SK-N-SH (cell line): ENCODE measurements at regions of chr2 and their contacts with region 1.

Region 1: DNA sequence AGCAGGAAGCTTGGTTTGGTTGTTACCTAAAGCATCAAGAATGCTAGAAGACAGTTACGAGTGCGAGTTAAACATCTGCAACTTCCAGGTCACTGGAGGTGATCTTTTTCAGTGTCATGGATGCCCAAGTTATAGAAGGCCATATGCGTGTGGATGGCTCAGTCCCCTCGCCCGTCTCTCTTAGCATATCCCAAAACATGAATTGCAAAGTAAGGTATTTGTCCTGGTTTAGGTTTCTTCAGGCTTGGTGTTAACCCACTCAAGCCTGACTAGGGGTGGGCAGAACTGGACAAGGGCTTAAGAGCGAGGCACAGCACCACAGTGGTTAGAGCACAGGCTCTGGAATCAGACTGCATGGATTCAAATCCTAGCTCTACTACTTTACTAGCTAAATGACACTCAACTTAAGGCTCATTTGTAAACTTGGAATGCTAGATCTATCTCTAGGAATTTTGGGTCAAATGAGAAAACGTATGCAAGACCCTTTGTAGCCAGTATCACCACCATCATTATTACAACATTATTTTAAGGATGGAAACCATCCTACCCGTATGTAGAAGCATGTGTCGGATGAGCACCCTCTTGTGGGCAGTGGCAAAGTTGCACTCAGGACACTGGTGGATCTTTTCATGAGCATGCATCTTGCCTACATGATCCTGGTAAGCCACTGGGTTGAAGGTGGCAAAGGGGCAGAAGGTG is 11.2 kb downstream of the ZNF142 start:
- DNase-seq: peak; percentile 76
- H3K4me3 ChIP-seq: no peak overlapping the region
- H3K27ac ChIP-seq: no peak overlapping the region; a peak in 1 of 4 replicates
- H3K4me1 ChIP-seq: no peaks in the 10 kb centered on the region; a peak in 1 of 4 replicates
- H3K27me3 ChIP-seq: no peaks in the 10 kb centered on the region
- CTCF ChIP-seq: peak; percentile 88
- EP300 ChIP-seq: no peak
- RAD21 ChIP-seq: peak; percentile 85

Region 2: DNA sequence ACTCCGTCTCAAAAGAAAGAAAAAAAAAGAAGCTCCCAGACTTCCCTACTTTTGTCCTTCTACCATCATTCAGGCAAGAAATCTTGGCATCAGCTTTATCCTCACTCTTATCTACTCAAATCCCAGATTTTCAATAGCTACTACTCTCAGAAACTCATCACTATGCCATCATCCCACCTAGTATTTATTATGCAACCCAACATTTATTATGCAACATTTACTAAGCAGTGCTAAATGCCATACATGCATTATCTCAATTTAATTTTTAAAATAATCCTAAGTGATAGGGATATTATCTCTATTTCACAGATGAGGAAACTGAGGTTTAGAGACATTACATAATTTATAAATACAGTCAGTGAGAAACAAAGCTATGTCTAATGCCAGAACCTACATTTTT is 84.2 kb before region 1 on chr2:
- CTCF ChIA-PET with region 1: interaction called, 10 read pairs
- POLR2A ChIA-PET with region 1: no interaction called
- DNase-seq: no peak
- H3K4me3 ChIP-seq: no peak overlapping the region
- H3K27ac ChIP-seq: no peak overlapping the region
- H3K4me1 ChIP-seq: peaks cover 4 to 5% of the 10 kb centered on the region in 2 experiments; a peak in 2 of 4 replicates
- H3K27me3 ChIP-seq: no peaks in the 10 kb centered on the region
- CTCF ChIP-seq: no peak
- EP300 ChIP-seq: no peak
- RAD21 ChIP-seq: no peak

Region 3: GRCh38 chr2:218631837-218632236 is 16.4 kb before region 1 on chr2:
- CTCF ChIA-PET with region 1: interaction called, 19 read pairs
- POLR2A ChIA-PET with region 1: no interaction called
- DNase-seq: no peak
- H3K4me3 ChIP-seq: no peak overlapping the region
- H3K27ac ChIP-seq: peak overlapping the region in 1 of 2 experiments; percentile 3; a peak in 1 of 4 replicates
- H3K4me1 ChIP-seq: peaks cover 0 to 4% of the 10 kb centered on the region in 2 experiments; a peak in 1 of 4 replicates
- H3K27me3 ChIP-seq: no peaks in the 10 kb centered on the region
- CTCF ChIP-seq: no peak
- EP300 ChIP-seq: no peak
- RAD21 ChIP-seq: no peak

Region 4: GRCh38 chr2:218708086-218708485 is 59.8 kb after region 1 on chr2:
- CTCF ChIA-PET with region 1: no interaction called
- POLR2A ChIA-PET with region 1: no interaction called
- DNase-seq: no peak
- H3K4me3 ChIP-seq: no peak overlapping the region
- H3K27ac ChIP-seq: no peak overlapping the region
- H3K4me1 ChIP-seq: 0 out of 4 replicates have a peak, but pooled peaks cover 0 to 5% of the 10 kb centered on the region in 2 experiments
- H3K27me3 ChIP-seq: no peaks in the 10 kb centered on the region
- CTCF ChIP-seq: no peak
- EP300 ChIP-seq: no peak
- RAD21 ChIP-seq: no peak

Region 5: GRCh38 chr2:219041252-219041651 is 393.0 kb after region 1 on chr2 and contains the start of gene CFAP65:
- CTCF ChIA-PET with region 1: no interaction called
- POLR2A ChIA-PET with region 1: no interaction called
- DNase-seq: peak; percentile 84
- H3K4me3 ChIP-seq: peak within 1 kb of the TSS; percentile 74 to 78
- H3K27ac ChIP-seq: no peak within 1 kb of the TSS
- H3K4me1 ChIP-seq: peaks cover 4 to 6% of the 10 kb centered on the region in 2 experiments; a peak in 1 of 4 replicates
- H3K27me3 ChIP-seq: no peaks in the 10 kb centered on the region
- CTCF ChIP-seq: no peak
- EP300 ChIP-seq: 0 out of 4 replicates have a peak, but pooled peaks of 1 of the 2 experiments have one; percentile 19
- RAD21 ChIP-seq: no peak
- polyA plus RNA-seq, gene CFAP65: 0.95 and 1.7 TPM in 2 replicates